Mammary epithelial cell (primary cell): ENCODE measurements at regions of chr12 and their contacts with region 1.

Region 1: DNA sequence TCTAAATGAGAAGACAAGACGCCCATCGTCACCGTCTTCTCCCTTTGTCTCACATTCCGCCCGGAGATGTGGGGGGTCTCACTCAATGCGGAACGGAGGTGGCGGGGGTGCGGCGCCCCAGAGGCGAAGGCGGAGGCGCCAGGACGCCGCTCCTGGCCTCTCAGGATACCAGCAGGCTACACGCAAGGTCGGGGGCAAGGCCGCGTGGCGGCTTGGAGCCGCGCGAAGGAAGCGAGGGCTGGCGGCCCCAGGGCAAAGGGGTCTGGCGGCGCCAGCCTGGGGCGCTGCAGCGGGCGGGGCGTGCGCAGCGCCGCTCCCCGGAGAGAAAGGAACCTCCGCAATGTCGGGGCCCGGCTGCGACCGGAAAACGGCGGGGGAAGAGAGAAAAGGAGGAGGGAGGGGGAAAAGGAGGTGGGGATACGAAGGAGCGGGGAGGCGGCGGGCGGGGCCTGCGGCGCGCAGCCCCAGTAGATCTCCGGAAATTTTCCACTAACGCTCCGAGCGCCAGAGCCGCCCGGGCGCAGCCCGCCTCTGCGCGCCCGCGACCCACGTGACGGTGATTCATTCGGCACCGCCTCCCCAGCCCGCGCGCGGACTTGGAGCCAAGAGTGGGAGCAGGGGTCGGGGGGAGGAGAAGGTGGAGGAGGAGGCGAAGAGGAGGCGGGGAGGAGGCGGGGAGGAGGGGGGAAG is 10.5 kb upstream of the SLC38A2 start:
- DNase-seq: peak; percentile 95
- H3K4me3 ChIP-seq: peak overlapping the region; percentile 60 to 68 (median 64)
- H3K27ac ChIP-seq: peak overlapping the region; percentile 96
- H3K4me1 ChIP-seq: peaks cover 50% of the 10 kb centered on the region
- H3K27me3 ChIP-seq: no peaks in the 10 kb centered on the region
- CTCF ChIP-seq: peak in 1 of 2 donors; percentile 8

Region 2: DNA sequence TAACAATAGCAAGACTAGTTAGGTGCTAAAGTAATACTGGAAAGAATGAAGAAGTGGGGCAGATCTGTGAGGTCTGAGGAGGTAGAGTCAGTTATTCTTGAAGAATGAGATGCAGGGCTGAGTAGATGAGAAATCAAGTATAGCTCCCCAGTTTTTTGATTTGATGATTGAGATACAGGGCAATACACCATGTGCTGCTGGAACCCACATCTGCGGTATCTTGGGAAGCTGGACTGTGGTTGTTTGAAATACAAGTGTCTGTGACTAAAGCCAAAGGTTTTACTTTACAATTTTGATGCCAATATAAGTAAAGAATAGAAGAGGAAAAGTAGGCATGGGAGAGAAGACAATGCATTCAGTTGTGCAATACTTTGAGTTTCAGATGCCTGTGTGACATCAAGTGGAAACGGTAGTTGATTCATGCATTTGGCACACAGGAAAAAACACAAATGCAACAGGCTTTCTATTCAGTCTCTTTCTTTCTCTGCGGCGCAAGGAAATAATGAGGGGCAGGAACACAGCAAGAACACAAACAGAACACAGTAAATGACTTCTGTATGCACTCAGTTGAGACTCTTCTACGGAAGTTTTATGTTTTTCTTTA is 179.6 kb after region 1 on chr12:
- CTCF ChIA-PET with region 1: interaction called, 6 read pairs
- dilution Hi-C with region 1: no loop called
- in situ Hi-C with region 1: loop called in 1 of 2 experiments (anchors 25 kb)
- intact Hi-C with region 1: no loop called
- DNase-seq: peak; percentile 95
- H3K4me3 ChIP-seq: no peak overlapping the region
- H3K27ac ChIP-seq: peak overlapping the region; percentile 96
- H3K4me1 ChIP-seq: peaks cover 41% of the 10 kb centered on the region
- H3K27me3 ChIP-seq: no peaks in the 10 kb centered on the region
- CTCF ChIP-seq: no peak